ENCODE measurements at regions of chr19 and their contacts with region 1.

Region 1: GRCh38 chr19:5719961-5720790 is at the starts of genes CATSPERD and LONP1:
- DNase-seq: peak; percentile 99

Region 2: GRCh38 chr19:5690125-5690954 is 29.8 kb before region 1 on chr19 and contains the start of gene RPL36:
- CTCF ChIA-PET with region 1: interaction called, 6 read pairs
- POLR2A ChIA-PET with region 1: interaction called, 49 read pairs
- DNase-seq: peak; percentile 92

Region 3: DNA sequence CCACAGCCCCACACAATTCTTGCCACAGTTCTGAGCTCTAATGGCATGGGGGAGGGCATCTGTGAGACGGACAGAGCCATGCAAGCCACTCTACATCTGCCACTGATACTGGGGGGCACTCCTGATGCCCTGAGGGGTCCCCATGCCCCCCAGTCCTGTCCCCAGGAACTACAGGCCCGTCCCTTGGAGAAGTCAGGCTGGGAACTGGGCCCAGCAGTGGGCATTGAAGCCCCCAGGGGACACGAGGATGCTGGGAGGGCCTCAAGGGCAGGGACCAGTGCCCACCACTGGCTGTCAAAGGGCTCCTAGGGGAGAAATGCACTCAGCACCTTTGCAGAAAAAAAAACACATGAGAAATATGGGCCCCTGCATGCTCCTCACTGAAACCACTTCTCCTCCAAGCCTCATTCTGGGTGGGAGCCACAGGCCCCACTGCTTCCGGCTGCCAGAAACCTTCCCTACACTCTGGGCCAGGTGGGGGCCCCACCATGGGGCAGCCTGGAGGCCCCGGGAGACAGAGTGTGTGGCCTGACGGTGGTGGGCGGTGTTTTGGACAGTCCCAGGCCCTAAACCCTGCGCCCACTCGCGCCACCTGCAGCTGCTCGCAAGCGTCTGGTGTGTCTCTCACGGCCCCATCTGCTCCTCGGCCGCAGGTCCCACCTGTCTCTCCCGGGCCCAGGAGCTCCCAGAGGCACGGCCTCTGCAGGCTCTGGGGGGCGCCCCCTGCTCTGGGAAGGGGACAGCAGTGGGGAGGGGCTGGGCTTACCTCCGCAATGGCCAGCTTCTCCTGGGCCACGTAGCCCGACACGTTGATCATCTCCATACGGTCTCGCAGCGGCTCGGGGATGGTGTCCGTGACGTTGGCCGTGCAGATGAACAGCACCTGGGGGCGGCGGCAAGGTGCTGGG is 24.6 kb before region 1 on chr19:
- CTCF ChIA-PET with region 1: no interaction called
- POLR2A ChIA-PET with region 1: interaction called, 35 read pairs
- DNase-seq: no peak

Region 4: DNA sequence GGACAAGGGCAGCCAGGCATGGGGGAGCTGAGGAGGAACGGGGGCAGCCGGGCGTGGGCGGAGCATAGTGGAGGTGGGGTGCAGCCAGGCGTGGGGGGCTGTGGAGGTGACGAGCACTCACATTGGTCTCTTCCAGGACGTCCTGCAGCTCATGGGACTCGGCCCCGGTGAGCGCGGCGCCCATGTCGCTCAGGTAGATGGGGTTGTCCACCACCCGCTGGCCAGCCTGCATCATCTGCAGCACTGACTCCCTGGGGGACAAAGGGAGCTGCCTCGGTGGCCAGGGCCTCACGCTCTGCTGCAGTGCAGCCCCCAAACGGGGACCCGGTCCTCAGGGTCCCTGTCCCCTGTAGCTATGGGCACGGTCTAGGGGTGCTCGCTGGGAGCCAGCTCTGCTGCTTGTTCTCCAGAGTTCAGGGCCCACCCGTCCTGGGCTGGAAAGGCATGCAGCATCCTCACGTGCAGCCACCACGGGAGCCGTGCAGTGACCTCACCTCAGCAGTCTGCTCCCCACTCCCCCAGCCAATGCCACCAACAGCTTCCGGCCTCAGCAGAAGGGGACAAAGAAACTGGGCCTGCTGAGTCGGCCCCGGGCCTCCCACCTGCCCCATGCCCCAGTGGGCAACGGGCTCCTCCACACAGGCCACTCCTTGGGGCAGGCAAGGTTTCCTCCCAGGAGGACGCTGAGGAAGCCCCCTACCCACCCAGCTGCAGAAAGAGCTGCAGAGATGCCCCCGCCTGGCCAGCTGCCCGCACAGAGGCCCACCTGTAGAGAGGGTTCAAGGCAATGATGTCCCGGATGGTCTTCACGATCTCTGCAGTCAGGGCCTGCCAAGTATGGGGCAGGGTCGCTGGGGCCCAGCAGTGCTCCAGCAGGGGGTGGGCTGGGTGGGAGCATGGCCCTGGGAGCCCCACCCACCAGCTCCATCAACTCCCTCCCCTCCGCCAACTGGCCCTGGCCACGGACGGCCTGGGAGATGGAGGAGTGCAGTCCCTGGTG is 12.3 kb before region 1 on chr19:
- CTCF ChIA-PET with region 1: no interaction called
- POLR2A ChIA-PET with region 1: interaction called, 12 read pairs
- DNase-seq: no peak

Region 5: GRCh38 chr19:5738426-5738825 is 18.2 kb after region 1 on chr19:
- CTCF ChIA-PET with region 1: interaction called, 3 read pairs
- POLR2A ChIA-PET with region 1: interaction called, 10 read pairs
- DNase-seq: no peak

Measured in HEK293T (cell line).